ENCODE measurements at regions of chr1 and their contacts with region 1.

Region 1: DNA sequence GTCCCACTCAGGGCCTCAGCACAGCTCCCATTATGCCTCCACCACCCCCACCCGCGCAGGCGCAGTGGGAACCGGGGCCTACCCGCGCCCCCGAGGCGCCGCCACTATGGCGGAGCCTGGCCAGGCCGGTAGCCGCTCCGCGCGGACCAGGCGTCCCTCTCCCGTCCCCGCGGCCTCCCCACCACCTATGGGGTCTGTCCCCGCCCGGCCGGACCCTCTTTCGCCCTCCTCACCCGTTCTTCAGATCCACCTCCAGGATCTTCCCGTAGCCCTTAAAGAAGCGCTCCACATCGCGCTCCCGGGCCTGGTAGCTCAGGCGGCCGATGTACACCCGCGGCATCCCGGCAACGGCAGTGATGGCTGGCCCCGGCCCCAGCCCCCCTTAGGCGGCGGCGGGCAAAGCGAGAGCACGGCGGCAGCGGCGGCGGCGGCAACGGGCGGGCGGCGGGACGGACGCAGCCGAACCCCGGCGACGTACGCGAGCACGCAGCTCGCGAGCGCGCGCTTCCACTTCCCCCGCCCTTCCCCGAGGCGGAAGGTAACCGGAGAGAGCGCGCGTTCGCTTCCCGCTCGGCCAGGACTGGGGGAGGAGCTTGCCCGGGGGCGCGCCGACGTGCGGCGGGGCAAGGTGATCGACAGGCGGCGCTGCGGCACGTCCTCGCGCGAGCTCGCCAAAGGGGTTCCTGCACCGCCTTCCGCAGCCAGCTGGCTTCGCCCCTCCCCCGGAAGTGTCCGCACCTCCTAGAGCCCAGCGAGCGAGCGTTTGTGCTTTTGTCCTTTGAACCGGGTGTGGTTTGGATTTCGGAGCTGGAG is at the start of gene SRSF4:
- DNase-seq: peak; percentile 100

Region 2: DNA sequence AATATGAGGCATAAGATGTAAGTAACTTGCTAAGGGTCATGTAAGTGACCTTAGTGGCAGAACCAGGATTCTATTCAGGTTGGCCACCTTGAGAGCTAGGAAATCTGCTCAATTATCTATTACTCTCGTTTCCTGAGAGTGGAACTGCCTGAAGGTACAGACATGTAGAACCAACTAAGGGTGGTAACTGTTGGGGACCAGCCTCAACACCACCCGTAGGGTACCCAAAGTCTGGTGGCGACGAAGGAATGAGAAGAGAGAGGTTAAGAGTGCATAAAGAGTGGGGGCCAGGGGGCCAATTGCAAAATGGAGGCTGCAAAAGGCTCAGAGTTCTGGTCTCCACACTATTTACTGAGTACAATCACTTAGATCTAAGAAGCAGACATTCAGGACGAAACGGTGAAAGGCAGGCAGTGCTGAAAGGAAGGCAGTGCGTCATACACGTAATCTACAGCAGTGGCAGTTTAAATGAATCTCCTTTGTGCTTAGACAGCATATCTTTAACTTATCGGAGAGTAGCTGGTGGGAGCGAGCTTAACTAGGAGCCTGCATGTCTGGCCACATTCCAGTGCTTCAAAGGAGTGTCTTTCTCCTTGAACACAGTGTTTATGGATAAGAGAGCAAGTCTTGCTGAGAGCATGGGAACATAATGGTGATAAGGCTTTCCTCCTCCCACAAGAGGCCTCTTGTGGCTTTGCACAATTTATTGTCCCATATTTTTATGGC is 24.9 kb before region 1 on chr1:
- CTCF ChIA-PET with region 1: interaction called, 3 read pairs
- POLR2A ChIA-PET with region 1: interaction called, 15 read pairs
- DNase-seq: peak; percentile 61

Region 3: GRCh38 chr1:29171089-29171488 is 10.5 kb before region 1 on chr1:
- CTCF ChIA-PET with region 1: interaction called, 3 read pairs
- POLR2A ChIA-PET with region 1: interaction called, 27 read pairs
- DNase-seq: no peak

Region 4: DNA sequence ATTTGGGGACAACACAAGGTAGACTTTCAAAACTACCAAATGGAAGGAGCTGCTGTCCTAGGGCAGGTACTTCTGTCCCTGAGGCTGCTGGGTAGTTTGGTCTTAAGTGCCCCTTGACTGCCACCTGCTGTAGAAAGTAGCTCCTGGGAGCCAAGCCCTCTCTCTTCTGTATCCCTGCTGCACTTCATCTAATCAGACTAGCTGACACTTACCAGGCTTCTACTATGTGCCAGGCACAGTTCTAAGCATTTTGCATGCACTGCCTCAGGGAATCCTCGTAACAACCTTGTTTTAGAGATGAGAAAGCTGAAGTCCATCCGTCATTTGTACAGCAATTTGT is 15.9 kb after region 1 on chr1:
- CTCF ChIA-PET with region 1: interaction called, 10 read pairs
- POLR2A ChIA-PET with region 1: interaction called, 29 read pairs
- DNase-seq: peak; percentile 65

Region 5: GRCh38 chr1:29230553-29231378 is 49.1 kb after region 1 on chr1 and contains the start of gene MECR:
- CTCF ChIA-PET with region 1: no interaction called
- POLR2A ChIA-PET with region 1: interaction called, 21 read pairs
- DNase-seq: peak; percentile 100